SK-N-SH (cell line): ENCODE measurements at regions of chr9 and their contacts with region 1.

Region 1: GRCh38 chr9:135973277-135974219 is 12.4 kb upstream of the UBAC1 start:
- DNase-seq: no peak
- H3K4me3 ChIP-seq: no peak overlapping the region
- H3K27ac ChIP-seq: no peak overlapping the region
- H3K4me1 ChIP-seq: peaks cover 12% of the 10 kb centered on the region in 2 experiments; a peak in 2 of 4 replicates
- H3K27me3 ChIP-seq: no peaks in the 10 kb centered on the region
- CTCF ChIP-seq: no peak
- EP300 ChIP-seq: no peak
- RAD21 ChIP-seq: no peak

Region 2: GRCh38 chr9:136051517-136052432 is 78.2 kb after region 1 on chr9:
- CTCF ChIA-PET with region 1: interaction called, 25 read pairs
- POLR2A ChIA-PET with region 1: no interaction called
- DNase-seq: peak; percentile 81
- H3K4me3 ChIP-seq: peak overlapping the region; percentile 65 to 75
- H3K27ac ChIP-seq: peak overlapping the region; percentile 78 to 88
- H3K4me1 ChIP-seq: peaks cover 26 to 34% of the 10 kb centered on the region in 2 experiments; a peak in 3 of 4 replicates
- H3K27me3 ChIP-seq: no peaks in the 10 kb centered on the region
- CTCF ChIP-seq: no peak
- EP300 ChIP-seq: peak in 1 of 2 experiments; percentile 81; a peak in 1 of 4 replicates
- RAD21 ChIP-seq: no peak; the same call in 1 of the 2 replicates

Region 3: DNA sequence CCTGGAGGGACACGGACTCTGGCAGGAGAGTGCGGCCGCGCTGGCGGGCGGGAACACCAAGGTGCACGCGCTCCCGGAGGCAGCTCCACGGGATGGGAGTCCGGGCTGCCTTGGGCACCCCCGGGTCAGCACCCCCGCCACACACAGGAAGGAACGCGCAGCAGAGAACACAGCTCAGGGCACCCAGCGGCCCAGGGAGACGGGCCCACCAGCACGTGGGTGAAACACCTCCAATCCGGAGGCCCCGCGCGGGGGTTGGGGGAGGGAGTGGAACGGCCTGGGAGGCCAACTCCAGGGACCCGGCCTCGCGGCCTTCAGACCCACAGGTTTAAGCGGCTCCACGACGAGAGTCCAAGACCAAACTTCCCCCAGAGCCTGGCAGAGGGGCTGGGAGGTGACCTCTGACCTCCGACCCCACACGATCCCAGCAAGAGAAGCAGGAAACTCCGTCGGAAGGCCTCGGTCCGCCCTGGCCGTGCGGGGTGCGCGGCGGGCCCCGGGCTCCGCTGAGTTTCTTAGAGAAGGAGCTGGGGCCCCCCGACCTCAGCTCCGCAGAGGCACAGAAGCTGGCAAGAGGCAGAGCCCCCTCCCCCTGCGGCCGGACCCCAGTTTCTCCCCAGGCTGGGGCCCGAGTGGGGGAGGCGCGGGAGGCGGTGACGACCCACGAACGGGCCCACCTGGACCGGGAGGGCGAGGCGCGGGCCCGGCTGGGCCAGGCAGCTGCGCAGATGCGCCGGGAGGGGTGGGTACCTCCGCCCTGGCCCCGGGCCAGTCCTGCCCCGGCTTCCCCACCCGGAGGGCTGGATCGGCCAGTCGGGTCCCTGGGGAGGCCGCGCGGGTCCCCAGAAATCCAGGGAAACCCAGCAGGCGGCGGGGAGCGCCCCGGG is 120.7 kb after region 1 on chr9:
- CTCF ChIA-PET with region 1: interaction called, 29 read pairs
- POLR2A ChIA-PET with region 1: no interaction called
- DNase-seq: peak; percentile 78
- H3K4me3 ChIP-seq: peak overlapping the region; percentile 75 to 78
- H3K27ac ChIP-seq: peak overlapping the region in 1 of 2 experiments; percentile 6; a peak in 2 of 4 replicates
- H3K4me1 ChIP-seq: peaks cover 31 to 32% of the 10 kb centered on the region in 2 experiments; a peak in 3 of 4 replicates
- H3K27me3 ChIP-seq: no peaks in the 10 kb centered on the region
- CTCF ChIP-seq: no peak
- EP300 ChIP-seq: no peak
- RAD21 ChIP-seq: no peak